Heart right ventricle (tissue), 16 donors: ENCODE measurements at regions of chr13 and their contacts with region 1.

Region 1: DNA sequence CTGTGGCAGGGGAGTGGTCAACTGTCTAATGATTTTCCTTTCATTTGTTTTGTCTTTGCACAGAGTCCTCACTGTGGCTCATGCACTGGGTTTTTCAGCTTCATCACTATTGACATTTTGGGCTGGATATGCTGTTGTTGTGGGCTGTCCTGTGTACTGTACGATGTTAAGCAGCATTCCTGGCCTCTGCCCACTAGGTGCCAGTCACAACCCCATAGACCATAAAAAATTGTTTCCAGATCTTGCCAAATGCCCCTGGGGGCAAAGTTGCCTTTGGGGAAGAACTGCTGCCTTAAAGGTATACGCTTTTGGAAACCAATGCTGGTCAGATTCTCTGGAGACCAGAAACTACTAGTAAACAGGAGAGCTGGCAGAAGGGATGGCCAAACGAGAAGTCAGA is 310.4 kb downstream of the SPRY2 start:
- DNase-seq: peak in 1 of 2 donors; percentile 30
- ATAC-seq: peak; percentile 42 to 82 (median 75)
- H3K4me3 ChIP-seq: no peak overlapping the region
- H3K27ac ChIP-seq: no peak overlapping the region
- H3K4me1 ChIP-seq: peaks cover 0 to 7% (median 0%) of the 10 kb centered on the region in 9 donors
- H3K27me3 ChIP-seq: no peaks in the 10 kb centered on the region
- CTCF ChIP-seq: peak in 8 of 9 donors; percentile 8 to 58 (median 38)

Region 2: GRCh38 chr13:79810669-79811068 is 219.8 kb before region 1 on chr13:
- intact Hi-C with region 1: no loop called
- DNase-seq: no peak
- ATAC-seq: no peak
- H3K4me3 ChIP-seq: no peak overlapping the region
- H3K27ac ChIP-seq: no peak overlapping the region
- H3K4me1 ChIP-seq: peaks cover 0 to 12% (median 0%) of the 10 kb centered on the region in 9 donors
- H3K27me3 ChIP-seq: no peaks in the 10 kb centered on the region
- CTCF ChIP-seq: no peak

Region 3: DNA sequence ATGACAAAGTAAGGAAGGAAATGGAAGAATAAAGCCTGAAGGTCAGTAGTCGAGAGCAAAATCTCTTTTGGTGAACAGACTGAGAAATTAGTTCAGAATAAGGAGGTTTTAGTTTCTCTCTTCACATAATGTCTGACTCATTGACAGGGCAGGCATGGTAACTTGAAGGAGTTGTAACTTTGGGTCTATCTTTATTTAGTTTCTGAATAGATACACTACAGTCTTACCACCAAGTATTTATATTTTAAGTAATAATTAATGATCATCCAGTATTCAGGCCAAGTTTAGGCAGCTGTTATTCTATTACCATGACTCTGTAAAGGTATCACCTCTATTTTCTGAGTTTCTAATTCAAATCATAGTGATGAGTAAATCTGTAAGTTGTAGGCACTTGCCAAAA is 90.5 kb after region 1 on chr13:
- intact Hi-C with region 1: loop called in 1 of 10 experiments (anchors 10 kb)
- DNase-seq: no peak
- ATAC-seq: no peak
- H3K4me3 ChIP-seq: no peak overlapping the region
- H3K27ac ChIP-seq: no peak overlapping the region
- H3K4me1 ChIP-seq: no peaks in the 10 kb centered on the region
- H3K27me3 ChIP-seq: no peaks in the 10 kb centered on the region
- CTCF ChIP-seq: no peak